ENCODE measurements at regions of chr2 and their contacts with region 1.

Region 1: GRCh38 chr2:20051532-20052228 is at the start of gene LAPTM4A:
- DNase-seq: peak; percentile 100
- ATAC-seq: peak; percentile 97
- H3K4me3 ChIP-seq: peak within 1 kb of the TSS; percentile 84 to 97 (median 92)
- H3K27ac ChIP-seq: peak within 1 kb of the TSS; percentile 97
- H3K4me1 ChIP-seq: peaks cover 56% of the 10 kb centered on the region
- H3K27me3 ChIP-seq: peaks cover 0 to 3% of the 10 kb centered on the region in 2 experiments; a peak in 1 of 5 replicates
- CTCF ChIP-seq: peak; percentile 2; the same call in 1 of the 2 replicates
- EP300 ChIP-seq: peak; percentile 31 to 38; a peak in 1 of 4 replicates
- POLR2A ChIP-seq: peak; percentile 80 to 98
- RAD21 ChIP-seq: peak; percentile 63
- total RNA-seq, gene LAPTM4A: 82.8 and 116 TPM in 2 replicates

Region 2: GRCh38 chr2:20015472-20016083 is 36.1 kb before region 1 on chr2:
- CTCF ChIA-PET with region 1: no interaction called
- POLR2A ChIA-PET with region 1: interaction called, 109 read pairs
- in situ Hi-C with region 1: no loop called
- intact Hi-C with region 1: loop called (anchors 2 kb)
- DNase-seq: peak; percentile 75
- ATAC-seq: no peak
- H3K4me3 ChIP-seq: no peak overlapping the region
- H3K27ac ChIP-seq: no peak overlapping the region
- H3K4me1 ChIP-seq: peaks cover 57% of the 10 kb centered on the region
- H3K27me3 ChIP-seq: no peaks in the 10 kb centered on the region; a peak in 1 of 5 replicates
- CTCF ChIP-seq: peak; percentile 73
- EP300 ChIP-seq: no peak
- POLR2A ChIP-seq: no peak
- RAD21 ChIP-seq: peak; percentile 70

Region 3: GRCh38 chr2:20033341-20033740 is 18.3 kb before region 1 on chr2:
- CTCF ChIA-PET with region 1: no interaction called
- POLR2A ChIA-PET with region 1: interaction called, 42 read pairs
- in situ Hi-C with region 1: no loop called
- intact Hi-C with region 1: no loop called
- DNase-seq: no peak
- ATAC-seq: no peak
- H3K4me3 ChIP-seq: no peak overlapping the region
- H3K27ac ChIP-seq: no peak overlapping the region
- H3K4me1 ChIP-seq: peaks cover 3% of the 10 kb centered on the region
- H3K27me3 ChIP-seq: no peaks in the 10 kb centered on the region
- CTCF ChIP-seq: no peak
- EP300 ChIP-seq: no peak
- POLR2A ChIP-seq: no peak
- RAD21 ChIP-seq: no peak

Region 4: DNA sequence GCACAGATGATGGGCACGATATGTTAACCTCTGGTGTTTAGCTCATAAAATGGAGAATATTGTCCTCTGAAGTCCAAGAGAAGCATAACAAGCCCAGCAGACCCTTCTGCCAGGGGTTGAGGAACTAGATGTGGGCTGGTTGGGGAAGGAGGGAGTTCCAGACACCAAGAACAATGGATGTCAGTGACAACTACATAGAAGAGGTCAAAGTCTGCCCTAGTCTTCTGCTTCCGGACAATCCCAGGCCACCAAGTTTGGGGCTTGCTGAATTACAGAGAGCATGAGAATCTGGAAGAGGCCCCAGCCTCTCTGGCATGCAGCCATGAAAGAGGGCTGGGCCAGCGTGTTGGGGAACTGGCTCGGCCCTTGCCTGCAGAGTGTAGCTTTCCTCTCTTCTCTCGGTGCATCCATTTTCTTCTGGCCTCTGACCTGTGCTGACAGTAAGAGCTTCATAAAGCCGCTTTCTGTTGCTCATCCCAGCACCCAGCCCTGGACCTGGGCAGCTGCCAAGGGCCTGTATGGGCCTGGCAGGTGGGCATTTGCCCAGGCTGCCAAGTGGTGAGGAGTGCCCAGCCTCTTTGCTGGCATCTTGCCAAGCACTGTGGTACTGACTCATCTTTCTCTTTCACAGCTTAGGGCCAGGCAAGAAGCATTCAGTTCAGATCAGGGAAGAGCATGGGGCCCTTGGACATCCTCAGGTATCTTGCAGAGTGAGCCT is 14.4 kb after region 1 on chr2:
- CTCF ChIA-PET with region 1: no interaction called
- POLR2A ChIA-PET with region 1: interaction called, 105 read pairs
- in situ Hi-C with region 1: no loop called
- intact Hi-C with region 1: loop called (anchors 2 kb)
- DNase-seq: peak; percentile 95
- ATAC-seq: peak; percentile 92
- H3K4me3 ChIP-seq: peak overlapping the region in 2 of 3 experiments; percentile 25 to 70; a peak in 5 of 6 replicates
- H3K27ac ChIP-seq: peak overlapping the region; percentile 1
- H3K4me1 ChIP-seq: peaks cover 67% of the 10 kb centered on the region
- H3K27me3 ChIP-seq: no peaks in the 10 kb centered on the region
- CTCF ChIP-seq: no peak
- EP300 ChIP-seq: peak in 1 of 2 experiments; percentile 67; a peak in 2 of 4 replicates
- POLR2A ChIP-seq: no peak
- RAD21 ChIP-seq: no peak

Region 5: GRCh38 chr2:20080839-20081415 is 29.2 kb after region 1 on chr2:
- CTCF ChIA-PET with region 1: no interaction called
- POLR2A ChIA-PET with region 1: interaction called, 40 read pairs
- in situ Hi-C with region 1: no loop called
- intact Hi-C with region 1: loop called (anchors 1 kb)
- DNase-seq: peak; percentile 68
- ATAC-seq: peak; percentile 83
- H3K4me3 ChIP-seq: peak overlapping the region; percentile 6 to 49 (median 35)
- H3K27ac ChIP-seq: no peak overlapping the region
- H3K4me1 ChIP-seq: peaks cover 56% of the 10 kb centered on the region
- H3K27me3 ChIP-seq: no peaks in the 10 kb centered on the region; a peak in 1 of 5 replicates
- CTCF ChIP-seq: no peak
- EP300 ChIP-seq: no peak
- POLR2A ChIP-seq: no peak
- RAD21 ChIP-seq: peak; percentile 41; the same call in 1 of the 2 replicates

Region 6: GRCh38 chr2:20097879-20098714 is 46.4 kb after region 1 on chr2:
- CTCF ChIA-PET with region 1: interaction called, 4 read pairs
- POLR2A ChIA-PET with region 1: interaction called, 18 read pairs
- in situ Hi-C with region 1: loop called (anchors 5 kb)
- intact Hi-C with region 1: loop called (anchors 1 kb)
- DNase-seq: peak; percentile 82
- ATAC-seq: peak; percentile 63
- H3K4me3 ChIP-seq: peak overlapping the region in 1 of 3 experiments; percentile 38; a peak in 2 of 6 replicates
- H3K27ac ChIP-seq: no peak overlapping the region
- H3K4me1 ChIP-seq: peaks cover 58% of the 10 kb centered on the region
- H3K27me3 ChIP-seq: no peaks in the 10 kb centered on the region
- CTCF ChIP-seq: peak; percentile 98
- EP300 ChIP-seq: no peak
- POLR2A ChIP-seq: no peak
- RAD21 ChIP-seq: peak; percentile 98

Measured in HepG2 (cell line).